Caco-2 (cell line): ENCODE measurements at regions of chr5 and their contacts with region 1.

Region 1: DNA sequence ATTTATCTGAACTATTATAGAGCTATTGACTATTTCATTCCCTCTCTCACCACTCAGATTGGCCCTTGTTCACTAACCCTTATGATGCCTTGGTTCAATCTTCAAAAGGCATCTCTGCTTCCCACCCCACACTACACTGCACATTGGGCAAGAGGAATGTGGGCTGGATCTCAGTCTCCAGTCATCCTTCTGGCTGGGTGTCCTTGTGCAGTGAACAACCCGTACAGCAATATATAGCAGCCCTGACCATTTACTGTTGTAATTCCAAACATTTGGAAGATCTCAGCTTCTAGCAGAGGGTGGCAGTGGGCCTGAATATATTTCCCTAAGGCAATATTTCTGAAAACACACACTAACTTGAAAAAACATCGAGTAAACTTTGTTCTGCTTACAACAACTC is 199.2 kb upstream of the GDNF start:
- DNase-seq: no peak
- H3K4me3 ChIP-seq: no peak overlapping the region
- H3K4me3 Mint-ChIP-seq: no peak overlapping the region
- H3K27ac Mint-ChIP-seq: no peak overlapping the region
- H3K4me1 ChIP-seq: no peaks in the 10 kb centered on the region
- H3K4me1 Mint-ChIP-seq: no peaks in the 10 kb centered on the region
- H3K27me3 ChIP-seq: no peaks in the 10 kb centered on the region
- H3K27me3 Mint-ChIP-seq: peaks cover 22% of the 10 kb centered on the region
- CTCF ChIP-seq: no peak

Region 2: DNA sequence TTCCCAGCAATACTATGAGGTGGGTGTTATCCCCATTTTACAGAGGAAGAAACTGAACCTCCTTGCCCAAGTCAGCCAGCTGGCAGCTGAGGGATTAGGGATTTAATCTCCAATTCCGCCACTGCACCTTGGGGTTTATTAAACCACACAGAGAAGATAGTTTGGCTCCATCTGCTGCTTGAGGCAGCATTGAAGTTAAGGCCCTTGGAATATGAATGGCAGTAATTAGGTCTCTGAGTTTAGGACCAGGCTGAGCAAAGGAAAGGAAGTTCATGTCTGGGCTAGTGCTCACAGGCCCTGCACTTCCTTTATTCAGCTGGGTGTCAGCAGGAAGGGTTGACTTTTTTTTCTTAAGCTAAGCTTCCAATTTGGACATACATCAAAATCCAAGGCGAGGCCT is 112.4 kb before region 1 on chr5:
- CTCF ChIA-PET with region 1: interaction called, 10 read pairs
- POLR2A ChIA-PET with region 1: no interaction called
- intact Hi-C with region 1: no loop called
- DNase-seq: no peak
- H3K4me3 ChIP-seq: no peak overlapping the region
- H3K4me3 Mint-ChIP-seq: no peak overlapping the region
- H3K27ac Mint-ChIP-seq: no peak overlapping the region
- H3K4me1 ChIP-seq: no peaks in the 10 kb centered on the region
- H3K4me1 Mint-ChIP-seq: no peaks in the 10 kb centered on the region
- H3K27me3 ChIP-seq: no peaks in the 10 kb centered on the region
- H3K27me3 Mint-ChIP-seq: peaks cover 23% of the 10 kb centered on the region
- CTCF ChIP-seq: no peak

Region 3: DNA sequence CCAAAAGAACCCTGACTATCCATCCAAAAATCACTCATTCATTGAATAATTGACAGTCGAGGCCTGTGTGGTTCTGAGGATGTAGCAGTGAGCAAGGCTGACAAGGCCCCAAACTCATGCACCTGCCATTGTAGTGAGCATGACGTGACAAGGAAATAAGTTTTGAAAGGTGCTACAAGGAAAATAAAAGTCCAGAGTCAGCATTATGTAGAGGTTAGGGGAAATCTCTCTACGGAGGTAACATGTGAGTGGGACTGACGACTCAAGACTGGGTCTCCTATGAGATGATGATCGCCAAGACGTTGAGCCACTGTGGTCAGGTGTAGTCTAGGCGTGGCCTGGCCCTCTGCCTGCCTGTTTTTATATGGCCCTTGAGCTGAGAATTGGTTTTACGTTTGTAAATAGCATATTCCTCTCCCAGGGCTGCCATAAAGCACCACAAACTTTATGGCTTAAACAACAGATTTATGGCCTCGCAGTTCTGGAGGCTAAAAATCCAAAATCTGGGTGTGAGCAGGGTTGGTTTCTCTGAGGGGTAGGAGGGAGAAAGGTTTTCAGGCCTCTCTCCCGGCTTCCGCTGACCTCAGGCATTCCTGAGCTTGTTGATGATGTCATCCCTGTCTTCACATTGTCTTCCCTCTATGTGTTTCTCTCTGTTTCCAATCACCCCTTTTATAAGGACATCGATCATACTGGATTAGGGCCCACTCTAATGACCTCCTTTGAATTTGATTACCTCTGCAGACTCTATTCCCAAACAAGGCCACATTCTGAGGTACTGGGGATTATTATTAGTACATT is 12.8 kb after region 1 on chr5:
- CTCF ChIA-PET with region 1: no interaction called
- POLR2A ChIA-PET with region 1: no interaction called
- intact Hi-C with region 1: no loop called
- DNase-seq: no peak
- H3K4me3 ChIP-seq: no peak overlapping the region
- H3K4me3 Mint-ChIP-seq: no peak overlapping the region
- H3K27ac Mint-ChIP-seq: no peak overlapping the region
- H3K4me1 ChIP-seq: no peaks in the 10 kb centered on the region
- H3K4me1 Mint-ChIP-seq: no peaks in the 10 kb centered on the region
- H3K27me3 ChIP-seq: no peaks in the 10 kb centered on the region
- H3K27me3 Mint-ChIP-seq: no peaks in the 10 kb centered on the region
- CTCF ChIP-seq: no peak

Region 4: GRCh38 chr5:38078161-38078560 is 39.1 kb after region 1 on chr5:
- CTCF ChIA-PET with region 1: no interaction called
- POLR2A ChIA-PET with region 1: no interaction called
- intact Hi-C with region 1: no loop called
- DNase-seq: no peak
- H3K4me3 ChIP-seq: no peak overlapping the region
- H3K4me3 Mint-ChIP-seq: no peak overlapping the region
- H3K27ac Mint-ChIP-seq: no peak overlapping the region
- H3K4me1 ChIP-seq: peaks cover 11% of the 10 kb centered on the region; the same call in 1 of the 2 replicates
- H3K4me1 Mint-ChIP-seq: peaks cover 7% of the 10 kb centered on the region
- H3K27me3 ChIP-seq: no peaks in the 10 kb centered on the region
- H3K27me3 Mint-ChIP-seq: peaks cover 2% of the 10 kb centered on the region
- CTCF ChIP-seq: no peak